PC-3 (cell line): ENCODE measurements at regions of chr17 and their contacts with region 1.

Region 1: GRCh38 chr17:50956750-50957523 is 90.8 kb upstream of the TOB1 start:
- DNase-seq: peak; percentile 71
- ATAC-seq: peak; percentile 70
- H3K4me3 ChIP-seq: no peak overlapping the region
- H3K27ac ChIP-seq: no peak overlapping the region
- H3K4me1 ChIP-seq: peaks cover 6% of the 10 kb centered on the region
- H3K27me3 ChIP-seq: no peaks in the 10 kb centered on the region
- CTCF ChIP-seq: peak; percentile 96

Region 2: DNA sequence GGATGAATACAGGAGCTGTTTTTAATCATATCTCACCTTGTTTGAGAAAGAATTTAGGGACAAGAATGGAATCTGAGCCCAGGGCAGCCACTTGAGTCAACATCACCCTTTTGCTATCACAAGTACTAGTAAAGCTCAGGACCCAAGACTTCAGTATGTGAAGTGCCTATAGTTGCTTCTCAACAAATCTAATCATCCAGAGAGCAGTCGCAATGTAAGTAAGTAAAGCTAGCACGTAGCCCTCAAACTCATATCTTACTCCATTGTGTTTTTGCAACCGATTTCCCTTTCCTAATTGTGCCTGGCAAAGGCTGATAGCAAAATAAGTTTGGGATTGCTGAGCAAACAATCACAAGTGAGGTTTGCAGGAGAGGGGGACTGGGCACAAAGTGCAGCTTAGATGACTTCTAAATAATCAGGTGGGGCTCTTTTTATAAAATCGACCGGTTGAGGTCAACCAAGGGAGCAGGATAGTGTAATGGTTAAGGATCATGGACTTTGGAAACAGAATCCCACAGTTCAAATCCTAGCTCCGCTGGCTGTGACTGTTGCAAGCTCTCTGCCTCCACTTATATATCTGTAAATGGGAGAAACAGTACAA is 103.8 kb before region 1 on chr17:
- CTCF ChIA-PET with region 1: interaction called, 11 read pairs
- POLR2A ChIA-PET with region 1: interaction called, 9 read pairs
- intact Hi-C with region 1: loop called (anchors 1 kb)
- DNase-seq: no peak
- ATAC-seq: no peak
- H3K4me3 ChIP-seq: no peak overlapping the region
- H3K27ac ChIP-seq: no peak overlapping the region
- H3K4me1 ChIP-seq: peaks cover 12% of the 10 kb centered on the region
- H3K27me3 ChIP-seq: no peaks in the 10 kb centered on the region
- CTCF ChIP-seq: no peak